Posterior vena cava (tissue), 2 donors: ENCODE measurements at regions of chr12 and their contacts with region 1.

Region 1: DNA sequence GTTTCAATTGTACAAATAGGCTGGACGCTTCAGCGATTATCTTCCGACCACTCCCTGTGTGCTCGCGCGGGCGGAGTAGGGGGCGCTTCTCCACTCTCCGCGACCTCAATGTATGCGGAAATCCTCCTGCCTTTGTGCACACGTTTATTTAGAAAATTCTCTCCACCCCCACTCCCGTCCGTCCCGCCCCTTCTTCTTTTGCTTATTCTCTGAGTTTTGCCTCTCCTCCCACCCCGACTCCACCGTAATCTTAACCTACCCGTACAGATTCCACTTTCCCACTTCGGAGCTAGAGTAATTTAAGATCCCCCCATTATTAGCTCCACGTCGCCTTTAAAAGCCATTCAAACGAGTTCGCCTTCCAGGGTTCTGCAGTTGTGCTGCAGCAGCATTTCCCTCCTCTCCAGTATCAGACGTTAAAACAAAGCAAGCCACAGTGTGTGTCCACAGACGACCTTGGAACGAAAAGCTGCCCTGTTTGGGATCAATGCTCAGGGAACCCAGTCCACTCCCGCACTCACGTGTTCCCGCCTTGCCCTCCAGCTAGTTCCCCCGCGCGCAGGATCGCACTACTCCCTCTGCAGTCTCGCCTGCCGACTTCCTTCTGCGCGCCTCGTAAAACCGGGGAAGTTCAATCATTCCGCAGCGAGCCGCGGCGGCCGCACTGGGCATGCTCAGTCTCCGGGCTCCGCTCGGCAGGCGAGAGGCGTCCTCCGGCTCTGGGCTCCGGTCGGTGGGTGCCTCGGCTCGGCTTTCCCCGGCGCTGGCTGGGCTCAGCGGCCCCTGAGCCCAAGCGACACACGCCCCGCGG is at the start of gene ANO6:
- DNase-seq: peak; percentile 96
- total RNA-seq, gene ANO6: 74.8 to 76.6 TPM

Region 2: DNA sequence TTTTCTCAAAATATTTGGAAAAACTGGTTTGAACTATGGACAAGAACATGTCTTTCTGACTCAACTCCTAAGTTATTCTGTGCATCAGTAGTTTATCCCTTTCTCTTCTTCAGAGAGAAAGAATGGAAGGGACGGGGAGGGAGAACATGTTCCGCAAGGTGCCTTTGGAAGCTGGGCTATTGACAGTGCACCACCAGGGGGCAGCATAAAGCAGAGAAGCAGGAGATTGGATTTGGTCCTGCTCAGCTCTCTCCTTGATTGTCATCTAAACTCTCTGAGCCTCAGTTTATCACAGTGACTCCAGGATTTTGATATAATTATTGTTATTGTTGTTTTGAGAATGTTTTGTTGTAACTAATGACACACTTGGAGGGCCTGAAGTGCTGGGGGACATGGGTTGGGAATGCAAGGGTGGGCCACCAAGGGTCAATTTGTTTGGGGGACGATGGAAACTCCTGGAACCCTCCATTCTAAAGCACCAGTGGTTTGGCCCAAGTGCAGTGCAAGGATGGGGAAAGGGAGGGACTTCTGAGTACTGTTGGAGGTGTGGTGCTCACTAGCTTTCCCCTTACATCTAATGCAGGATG is 45.1 kb before region 1 on chr12:
- intact Hi-C with region 1: loop called in 1 of 2 experiments (anchors 2 kb)
- DNase-seq: peak; percentile 92

Region 3: DNA sequence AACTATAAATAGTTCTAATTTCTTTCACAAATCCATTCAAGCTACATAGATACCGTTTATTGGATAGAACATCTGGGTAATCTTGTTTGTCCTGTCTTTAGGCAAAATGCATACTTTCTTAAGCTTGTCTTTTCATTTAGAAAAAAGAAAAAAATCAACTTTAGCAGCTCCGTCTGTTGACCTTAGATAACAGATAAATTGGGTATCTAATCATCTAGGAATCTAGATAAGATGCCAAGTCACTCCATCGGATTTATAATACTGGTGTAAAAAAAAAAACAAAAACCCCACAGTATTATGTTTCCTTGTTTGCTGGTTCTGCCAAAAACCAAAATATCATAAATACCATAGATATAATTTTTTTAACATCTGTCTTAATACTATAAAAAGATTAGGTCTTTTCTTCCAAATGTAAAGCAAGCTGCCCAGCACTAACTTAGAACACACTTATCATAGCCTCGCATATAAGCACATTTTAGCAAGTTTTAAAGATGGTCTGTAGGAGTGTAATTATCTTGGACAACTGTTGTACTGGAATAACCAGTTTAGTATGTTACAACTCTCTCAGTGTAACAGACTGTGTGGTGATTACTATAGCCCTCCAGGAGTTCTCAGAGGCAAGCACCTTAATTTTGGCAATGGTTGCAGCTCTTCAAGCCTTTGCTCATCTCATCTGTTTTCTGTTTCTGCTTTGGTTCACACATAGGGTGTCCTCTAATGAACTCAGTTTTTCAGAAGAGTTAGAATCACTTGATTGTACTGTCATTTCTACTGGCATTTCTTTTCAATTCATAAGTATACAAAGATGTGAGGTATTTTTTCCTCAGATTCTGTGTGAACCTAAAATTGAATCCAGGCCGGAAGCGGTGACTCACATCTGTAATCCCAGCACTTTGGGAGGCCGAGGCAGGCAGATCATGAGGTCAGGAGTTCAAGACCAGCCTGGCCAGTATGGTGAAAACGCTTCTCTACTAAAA is 83.4 kb after region 1 on chr12:
- intact Hi-C with region 1: loop called in 1 of 2 experiments (anchors 10 kb)
- DNase-seq: no peak

Region 4: DNA sequence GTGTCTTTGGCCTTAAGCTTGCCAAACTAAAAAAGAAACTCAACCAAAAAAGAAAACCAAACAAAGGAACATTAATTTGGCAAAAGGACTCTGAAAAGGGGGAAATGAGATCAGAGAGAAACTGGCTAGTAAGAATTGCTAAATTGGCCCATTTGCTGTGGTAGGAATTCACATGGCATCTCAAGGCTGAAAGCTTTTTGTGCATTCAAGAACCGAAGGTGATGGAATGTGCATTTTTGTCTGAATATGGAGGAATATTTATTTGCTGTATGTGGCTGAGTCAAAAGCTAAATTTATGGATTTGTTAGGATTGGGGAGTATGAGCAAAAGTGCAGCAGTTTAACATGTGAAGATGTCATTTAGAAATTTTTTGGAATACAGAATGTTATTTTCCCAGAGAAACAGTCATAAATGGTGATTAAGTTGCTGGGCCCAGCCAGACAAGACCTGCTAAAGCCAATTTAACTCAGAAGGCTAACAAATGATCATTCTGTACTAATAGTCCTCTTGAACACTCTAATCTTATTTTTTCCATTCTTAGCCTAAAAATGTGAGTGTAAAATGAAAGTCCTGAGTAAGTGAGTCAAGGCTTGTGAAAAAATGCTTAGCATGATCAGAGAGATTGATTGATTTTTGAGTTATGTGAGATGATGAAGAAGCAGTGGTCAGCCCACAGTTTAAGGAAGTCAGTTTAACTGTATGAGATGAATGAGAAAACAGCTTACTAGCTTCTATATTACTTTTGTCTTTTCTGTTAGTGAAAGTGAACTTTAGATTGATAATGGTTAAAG is 94.4 kb after region 1 on chr12:
- intact Hi-C with region 1: loop called in 1 of 2 experiments (anchors 10 kb)
- DNase-seq: no peak

Region 5: DNA sequence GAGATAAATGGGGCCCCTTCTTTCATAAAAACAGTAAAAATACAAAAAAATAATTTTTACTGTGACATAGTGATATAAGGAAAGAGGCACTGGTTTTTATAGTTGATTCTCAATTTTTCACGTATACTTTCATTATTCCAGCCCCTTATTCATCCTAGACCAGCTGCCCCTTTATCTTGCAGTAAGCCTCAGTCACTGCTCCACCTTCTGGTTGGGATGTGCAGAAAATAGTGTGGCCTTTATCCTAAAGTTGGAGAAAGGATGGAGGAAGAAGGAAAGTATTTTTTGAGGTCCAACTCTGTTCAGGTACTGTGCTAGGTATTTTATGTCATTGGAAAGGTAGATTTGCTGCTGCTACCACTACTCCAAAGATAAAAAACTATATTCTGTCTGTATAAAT is 172.9 kb after region 1 on chr12:
- intact Hi-C with region 1: loop called (anchors 10 kb)
- DNase-seq: no peak